Posterior vena cava (tissue), 2 donors: ENCODE measurements at regions of chr22 and their contacts with region 1.

Region 1: DNA sequence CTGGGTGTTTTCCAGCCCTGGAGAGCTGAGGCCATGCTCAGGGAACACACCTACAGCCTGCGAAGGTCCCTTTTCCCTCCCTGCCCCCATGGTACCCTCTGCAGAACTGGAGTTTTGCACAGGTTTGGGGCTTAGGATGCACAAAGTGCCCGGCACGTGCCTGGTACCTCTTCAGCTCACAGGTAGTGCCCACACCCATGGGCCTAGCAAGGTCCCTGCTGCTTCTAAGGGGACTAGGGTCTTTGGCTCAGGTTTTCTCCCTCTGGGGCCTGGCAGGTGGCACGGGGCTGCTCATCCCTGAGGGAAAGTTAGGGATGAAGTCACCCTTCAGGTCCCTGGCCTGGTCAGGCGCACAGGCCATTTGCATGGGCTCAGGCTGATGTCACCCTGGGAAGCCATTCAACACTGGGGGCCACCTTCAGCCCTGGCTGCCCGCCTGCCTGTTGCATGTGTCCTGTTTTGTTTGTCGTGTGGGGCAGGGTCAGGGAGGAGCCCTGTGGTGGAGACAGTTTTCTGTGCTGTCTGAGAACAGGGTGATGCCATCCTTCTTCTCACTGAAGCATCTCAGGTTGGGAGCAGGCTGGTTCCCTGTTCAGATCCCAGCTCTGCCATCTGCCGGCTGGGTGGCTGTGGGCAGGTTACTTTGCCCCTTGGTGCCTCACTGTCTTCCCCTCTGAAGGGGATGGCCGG is 68.3 kb upstream of the CRYBB3 start:
- DNase-seq: no peak

Region 2: GRCh38 chr22:24076091-24076867 is 1055.1 kb before region 1 on chr22:
- intact Hi-C with region 1: no loop called
- DNase-seq: peak; percentile 34

Region 3: GRCh38 chr22:25110846-25111578 is 20.3 kb before region 1 on chr22:
- intact Hi-C with region 1: no loop called
- DNase-seq: peak; percentile 86

Region 4: DNA sequence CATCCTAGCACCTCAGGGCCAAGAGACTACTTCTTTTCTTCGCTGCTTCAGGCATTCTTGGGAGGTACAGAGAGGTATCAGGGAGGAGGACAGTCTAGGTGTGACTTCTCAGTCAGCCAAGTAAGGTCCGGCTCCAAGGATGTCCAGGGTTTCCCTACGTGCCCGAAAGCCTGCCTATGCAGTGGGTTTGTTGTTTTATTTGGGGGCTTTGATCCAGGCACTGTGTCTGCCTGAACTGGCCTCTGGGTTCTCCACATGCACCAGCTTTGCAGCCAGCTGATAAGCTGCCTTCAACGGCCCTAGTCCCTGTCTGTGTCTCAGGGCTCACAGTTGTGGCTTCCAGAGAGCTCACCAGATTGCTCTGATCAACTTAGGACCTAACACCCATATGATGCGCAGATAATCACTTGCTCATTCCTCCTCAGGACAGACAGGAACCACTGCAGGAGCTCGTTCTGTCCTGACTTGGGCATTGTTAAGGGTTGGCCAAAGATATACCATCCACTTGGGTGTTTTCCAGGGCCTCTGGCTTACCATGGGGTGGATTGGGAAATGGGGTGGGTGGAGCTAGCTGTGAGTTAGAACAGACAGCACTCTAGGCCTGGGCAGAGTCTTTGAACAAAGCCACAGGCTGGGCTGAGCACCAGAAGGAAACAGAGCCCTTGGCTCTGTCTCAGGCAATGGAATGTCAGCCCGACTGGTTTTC is 22.8 kb after region 1 on chr22:
- intact Hi-C with region 1: loop called in 1 of 2 experiments (anchors 1 kb)
- DNase-seq: peak; percentile 80

Region 5: DNA sequence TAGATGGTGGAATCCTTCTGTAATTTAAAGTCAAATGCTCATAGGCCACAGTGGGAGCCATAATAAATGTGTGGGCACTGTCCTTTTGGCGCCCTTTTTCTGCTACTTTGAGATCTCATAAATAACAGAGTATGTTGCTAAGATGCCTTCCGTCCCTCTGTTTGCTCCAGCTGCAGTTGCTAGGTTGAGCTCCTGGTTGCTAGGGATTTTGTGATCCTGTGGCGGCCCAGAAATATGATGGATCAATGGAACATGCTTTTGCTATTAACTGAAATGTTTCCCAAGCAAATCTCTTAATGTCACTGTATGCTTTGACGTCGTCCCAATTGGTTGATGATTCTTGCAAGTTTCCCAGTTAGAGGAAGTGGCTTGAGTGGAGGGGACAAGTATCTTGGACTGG is 664.1 kb after region 1 on chr22:
- intact Hi-C with region 1: no loop called
- DNase-seq: no peak